ENCODE measurements at regions of chr1 and their contacts with region 1.

Region 1: DNA sequence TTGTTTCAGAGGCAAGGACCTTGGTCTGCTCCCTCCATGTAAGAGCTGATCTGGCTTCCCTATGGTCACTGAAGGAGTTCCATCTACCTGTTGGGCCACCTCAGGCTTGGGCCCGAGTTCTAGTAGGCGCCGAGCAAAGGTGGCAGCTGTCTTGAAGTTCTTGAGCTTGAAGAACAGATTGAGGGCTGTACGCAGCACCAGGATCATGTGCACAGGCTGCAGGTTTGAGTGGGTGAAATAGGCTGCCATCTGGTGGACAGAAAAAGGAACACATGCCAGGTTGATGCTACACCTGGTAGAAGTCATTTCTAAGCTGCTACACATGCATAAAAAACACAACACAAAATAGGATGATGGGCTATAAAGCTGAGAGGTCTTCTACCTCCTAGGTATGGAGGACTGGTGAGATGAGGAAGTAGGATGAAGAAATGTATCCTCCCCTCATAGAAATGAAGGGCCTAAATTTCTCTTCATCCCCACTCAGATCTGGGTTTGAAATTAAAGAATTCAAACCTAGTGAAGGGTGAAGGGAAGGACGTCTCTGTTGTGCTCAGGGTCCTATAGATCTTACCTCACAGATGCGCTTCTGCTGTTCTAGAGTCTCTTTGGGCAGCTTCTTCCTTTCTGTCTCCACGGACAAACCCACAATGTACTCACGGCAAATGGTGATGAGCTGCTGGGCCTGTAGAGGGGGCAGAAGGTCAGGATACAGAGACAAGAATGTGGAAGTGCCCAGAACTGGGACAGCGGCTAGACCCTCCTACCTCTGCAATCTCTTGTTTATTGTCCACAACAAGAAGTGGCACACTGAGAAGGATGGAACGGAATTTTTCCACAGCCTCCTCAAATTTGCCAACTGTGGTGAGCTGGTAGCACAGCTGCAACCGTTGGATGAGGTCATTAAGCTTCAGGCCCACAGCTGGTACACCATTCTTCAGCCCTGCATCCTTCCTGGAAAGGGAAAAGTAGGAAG is 6.6 kb upstream of the PEX19 start:
- DNase-seq: peak in 1 of 2 experiments; percentile 62
- H3K4me3 ChIP-seq: no peak overlapping the region
- H3K27ac ChIP-seq: no peak overlapping the region
- H3K4me1 ChIP-seq: no peaks in the 10 kb centered on the region
- H3K27me3 ChIP-seq: no peaks in the 10 kb centered on the region
- CTCF ChIP-seq: peak; percentile 69 to 94 (median 71)
- EP300 ChIP-seq: no peak
- POLR2A ChIP-seq: no peak
- RAD21 ChIP-seq: peak; percentile 58 to 59

Region 2: GRCh38 chr1:160098852-160099561 is 192.5 kb before region 1 on chr1:
- CTCF ChIA-PET with region 1: interaction called, 22 read pairs
- POLR2A ChIA-PET with region 1: no interaction called
- DNase-seq: peak; percentile 81 to 99
- H3K4me3 ChIP-seq: peak overlapping the region; percentile 33 to 56 (median 50); a peak in 7 of 8 replicates
- H3K27ac ChIP-seq: peak overlapping the region; percentile 21; the same call in 1 of the 2 replicates
- H3K4me1 ChIP-seq: peaks cover 12 to 50% (median 33%) of the 10 kb centered on the region in 4 experiments
- H3K27me3 ChIP-seq: no peaks in the 10 kb centered on the region
- CTCF ChIP-seq: no peak
- EP300 ChIP-seq: no peak
- POLR2A ChIP-seq: no peak
- RAD21 ChIP-seq: 0 out of 4 replicates have a peak, but pooled peaks of 1 of the 2 experiments have one; percentile 3

Region 3: DNA sequence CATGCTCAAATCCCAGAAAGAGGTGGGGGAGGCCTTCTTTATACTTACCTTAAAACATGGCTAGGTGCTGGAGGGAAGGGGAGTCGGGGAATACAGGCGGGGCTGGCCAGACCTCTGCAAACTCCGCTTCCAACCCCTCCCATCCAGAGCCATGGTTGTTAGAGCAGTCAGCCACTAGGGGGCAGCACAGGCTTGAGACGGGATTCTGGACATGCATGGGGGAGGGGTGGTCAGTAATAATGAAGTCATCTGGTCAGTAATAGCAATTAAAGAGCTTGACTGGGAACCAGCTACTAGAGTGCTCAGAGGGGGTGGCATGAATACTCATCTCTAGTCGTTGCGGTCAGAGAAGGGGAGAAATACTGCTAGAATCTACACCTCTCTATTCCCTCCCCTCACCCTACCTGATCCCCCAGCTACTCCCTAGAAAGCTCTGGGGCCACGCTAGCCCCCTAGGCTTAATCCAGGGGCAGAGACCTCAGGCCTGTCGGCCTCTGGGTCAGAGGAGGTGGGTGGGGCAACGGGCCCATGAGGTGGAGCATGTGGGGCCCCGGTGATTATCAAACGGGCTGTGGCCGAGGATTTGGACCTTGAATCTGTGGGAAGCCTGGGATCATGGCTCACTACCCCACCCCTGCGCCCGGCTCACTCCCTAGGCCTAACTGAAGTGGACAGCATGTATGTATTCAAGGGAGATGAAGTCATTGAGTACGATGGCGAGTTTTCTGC is 98.3 kb before region 1 on chr1:
- CTCF ChIA-PET with region 1: interaction called, 51 read pairs
- POLR2A ChIA-PET with region 1: no interaction called
- DNase-seq: peak; percentile 84 to 98
- H3K4me3 ChIP-seq: 0 out of 8 replicates have a peak overlapping the region, but pooled peaks of 1 of the 4 experiments have one; percentile 12
- H3K27ac ChIP-seq: no peak overlapping the region
- H3K4me1 ChIP-seq: peaks cover 3 to 26% (median 8%) of the 10 kb centered on the region in 4 experiments; a peak in 6 of 7 replicates
- H3K27me3 ChIP-seq: no peaks in the 10 kb centered on the region; a peak in 1 of 7 replicates
- CTCF ChIP-seq: peak; percentile 94 to 95 (median 94)
- EP300 ChIP-seq: no peak
- POLR2A ChIP-seq: no peak
- RAD21 ChIP-seq: peak; percentile 95 to 96

Region 4: DNA sequence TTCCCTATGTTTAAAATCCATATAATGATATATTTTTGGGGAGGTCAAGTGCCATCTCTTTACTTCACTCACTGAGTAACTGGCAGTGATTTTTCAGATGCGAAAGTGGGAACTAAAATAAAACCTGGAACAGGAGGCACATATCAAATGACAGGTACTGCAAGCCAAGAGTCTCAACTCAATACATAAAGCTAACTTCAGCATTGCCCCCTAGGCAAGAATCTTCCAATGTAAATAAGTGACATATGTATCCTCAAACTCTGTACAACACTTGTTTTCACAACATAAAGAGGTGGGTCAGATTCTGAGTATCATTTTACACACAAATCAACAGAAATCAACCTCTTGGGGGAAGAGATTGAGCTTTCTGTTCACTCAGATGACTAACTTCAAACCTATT is 47.3 kb before region 1 on chr1:
- CTCF ChIA-PET with region 1: interaction called, 24 read pairs
- POLR2A ChIA-PET with region 1: no interaction called
- DNase-seq: no peak
- H3K4me3 ChIP-seq: no peak overlapping the region
- H3K27ac ChIP-seq: no peak overlapping the region
- H3K4me1 ChIP-seq: no peaks in the 10 kb centered on the region
- H3K27me3 ChIP-seq: no peaks in the 10 kb centered on the region
- CTCF ChIP-seq: no peak
- EP300 ChIP-seq: no peak
- POLR2A ChIP-seq: no peak
- RAD21 ChIP-seq: no peak

Region 5: GRCh38 chr1:160267284-160267991 is 24.1 kb before region 1 on chr1:
- CTCF ChIA-PET with region 1: interaction called, 28 read pairs
- POLR2A ChIA-PET with region 1: interaction called, 79 read pairs
- DNase-seq: no peak
- H3K4me3 ChIP-seq: no peak overlapping the region
- H3K27ac ChIP-seq: no peak overlapping the region
- H3K4me1 ChIP-seq: peaks cover 0 to 1% (median 0%) of the 10 kb centered on the region in 4 experiments; a peak in 1 of 7 replicates
- H3K27me3 ChIP-seq: no peaks in the 10 kb centered on the region; a peak in 1 of 7 replicates
- CTCF ChIP-seq: no peak
- EP300 ChIP-seq: no peak
- POLR2A ChIP-seq: no peak
- RAD21 ChIP-seq: no peak

Region 6: DNA sequence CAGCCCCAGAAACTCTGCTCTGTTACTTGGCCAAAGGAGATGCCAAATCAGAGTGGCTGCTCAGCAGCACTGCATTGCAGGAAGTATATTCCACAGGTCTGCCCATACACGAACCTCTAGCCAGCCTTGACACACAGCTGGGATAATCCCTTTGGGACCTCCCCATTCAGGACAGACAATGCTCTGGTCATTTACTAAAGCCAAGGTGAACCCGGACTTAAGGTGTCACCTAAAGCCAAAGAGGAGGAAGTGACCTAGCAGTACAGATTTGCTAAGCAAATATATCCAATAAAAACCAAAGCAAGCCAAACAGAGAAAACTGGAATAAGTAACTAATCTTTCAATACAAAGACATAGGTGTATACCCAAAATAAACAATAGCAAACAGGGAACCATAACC is 23.8 kb after region 1 on chr1:
- CTCF ChIA-PET with region 1: interaction called, 36 read pairs
- POLR2A ChIA-PET with region 1: interaction called, 4 read pairs
- DNase-seq: no peak
- H3K4me3 ChIP-seq: no peak overlapping the region
- H3K27ac ChIP-seq: no peak overlapping the region
- H3K4me1 ChIP-seq: no peaks in the 10 kb centered on the region
- H3K27me3 ChIP-seq: no peaks in the 10 kb centered on the region
- CTCF ChIP-seq: no peak
- EP300 ChIP-seq: no peak
- POLR2A ChIP-seq: no peak
- RAD21 ChIP-seq: no peak

Region 7: GRCh38 chr1:160362168-160362957 is 70.8 kb after region 1 on chr1:
- CTCF ChIA-PET with region 1: interaction called, 20 read pairs
- POLR2A ChIA-PET with region 1: interaction called, 5 read pairs
- DNase-seq: no peak
- H3K4me3 ChIP-seq: no peak overlapping the region
- H3K27ac ChIP-seq: peak overlapping the region; percentile 8; the same call in 1 of the 2 replicates
- H3K4me1 ChIP-seq: peaks cover 3 to 8% (median 4%) of the 10 kb centered on the region in 4 experiments; a peak in 6 of 7 replicates
- H3K27me3 ChIP-seq: no peaks in the 10 kb centered on the region
- CTCF ChIP-seq: no peak
- EP300 ChIP-seq: no peak
- POLR2A ChIP-seq: no peak
- RAD21 ChIP-seq: no peak

Region 8: GRCh38 chr1:160420881-160421842 is 129.6 kb after region 1 on chr1:
- CTCF ChIA-PET with region 1: no interaction called
- POLR2A ChIA-PET with region 1: no interaction called
- DNase-seq: no peak
- H3K4me3 ChIP-seq: no peak overlapping the region
- H3K27ac ChIP-seq: no peak overlapping the region
- H3K4me1 ChIP-seq: no peaks in the 10 kb centered on the region
- H3K27me3 ChIP-seq: no peaks in the 10 kb centered on the region
- CTCF ChIP-seq: no peak
- EP300 ChIP-seq: no peak
- POLR2A ChIP-seq: no peak
- RAD21 ChIP-seq: no peak

Region 9: DNA sequence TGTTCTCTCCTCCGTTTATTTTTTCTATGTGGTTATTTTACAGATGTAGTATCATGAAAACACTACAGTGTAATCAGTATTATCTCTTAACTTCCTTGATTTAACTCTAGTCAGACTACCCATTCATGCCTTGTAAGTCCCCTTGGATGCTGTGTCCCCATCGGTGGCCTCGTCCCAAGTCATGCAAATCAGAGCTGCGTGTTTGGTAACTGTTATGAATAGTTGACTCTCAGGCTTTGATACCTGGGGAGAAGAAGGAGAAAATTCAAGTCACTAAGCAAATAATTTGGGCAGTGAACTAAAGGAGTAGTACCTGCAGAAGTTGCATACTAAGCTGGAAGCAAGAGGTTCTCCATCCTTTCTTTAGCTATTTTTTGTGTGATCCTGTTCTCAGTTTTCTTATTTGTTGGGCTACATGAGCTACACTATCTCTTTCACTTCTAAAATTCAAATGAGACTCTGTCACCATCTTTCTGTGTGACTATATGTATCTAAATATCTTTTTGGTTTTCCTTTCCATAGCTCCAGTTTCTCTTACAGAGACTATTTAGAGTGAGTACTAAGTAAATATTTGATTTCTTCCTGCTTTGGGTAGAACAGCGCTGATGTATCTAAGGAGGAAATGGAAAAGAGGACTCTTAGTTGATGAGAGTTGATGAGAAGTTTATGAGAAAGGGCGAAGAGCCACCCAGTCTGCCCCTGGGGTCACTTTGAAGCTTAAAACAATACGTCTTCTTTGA is 159.8 kb after region 1 on chr1:
- CTCF ChIA-PET with region 1: no interaction called
- POLR2A ChIA-PET with region 1: no interaction called
- DNase-seq: no peak
- H3K4me3 ChIP-seq: no peak overlapping the region
- H3K27ac ChIP-seq: no peak overlapping the region
- H3K4me1 ChIP-seq: no peaks in the 10 kb centered on the region
- H3K27me3 ChIP-seq: peaks cover 0 to 1% (median 0%) of the 10 kb centered on the region in 4 experiments; a peak in 1 of 7 replicates
- CTCF ChIP-seq: no peak
- EP300 ChIP-seq: no peak
- POLR2A ChIP-seq: no peak
- RAD21 ChIP-seq: no peak

Region 10: DNA sequence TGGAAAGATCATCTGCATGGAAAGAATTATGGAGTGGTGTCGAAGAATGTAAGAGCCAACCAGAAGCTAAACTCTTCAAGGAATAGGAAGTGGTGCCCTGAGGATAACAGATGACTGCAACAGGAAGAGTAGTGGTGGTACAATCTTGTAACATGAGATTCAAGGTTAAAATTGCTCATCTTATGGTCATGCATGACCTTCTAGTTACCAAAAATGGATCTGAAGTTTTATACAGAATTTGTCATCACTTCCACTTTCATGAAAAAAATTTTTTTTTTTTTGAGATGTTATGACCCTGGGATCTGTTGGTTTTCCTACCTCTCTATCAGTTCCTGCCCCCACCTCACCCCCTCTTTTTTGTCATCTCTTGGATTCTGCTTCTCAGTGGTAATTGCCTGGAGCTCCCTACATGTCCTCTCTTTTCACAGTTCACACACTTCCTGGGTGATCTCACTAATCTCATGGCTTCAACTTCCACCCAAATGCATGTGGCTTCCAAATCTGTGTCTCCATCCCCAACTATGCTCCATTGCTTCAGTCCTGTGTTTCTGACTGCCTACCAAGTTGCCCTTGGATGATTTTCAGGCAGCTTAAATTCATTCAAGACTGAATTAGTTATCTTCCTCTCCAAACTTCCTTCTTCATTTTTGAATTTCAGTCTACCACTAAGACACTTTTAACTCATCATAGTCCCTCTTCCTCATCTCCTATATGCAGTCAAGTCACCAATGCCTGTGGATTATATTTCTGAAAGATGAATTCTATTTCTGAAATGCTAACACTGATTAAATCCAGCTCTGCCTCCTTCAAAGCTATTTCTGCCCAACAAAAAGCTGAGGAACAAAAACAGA is 183.1 kb after region 1 on chr1:
- CTCF ChIA-PET with region 1: no interaction called
- POLR2A ChIA-PET with region 1: no interaction called
- DNase-seq: no peak
- H3K4me3 ChIP-seq: no peak overlapping the region
- H3K27ac ChIP-seq: no peak overlapping the region
- H3K4me1 ChIP-seq: no peaks in the 10 kb centered on the region
- H3K27me3 ChIP-seq: no peaks in the 10 kb centered on the region
- CTCF ChIP-seq: no peak
- EP300 ChIP-seq: no peak
- POLR2A ChIP-seq: no peak
- RAD21 ChIP-seq: no peak

Measured in H1 (cell line).